ENCODE measurements at regions of chr10 and their contacts with region 1.

Region 1: GRCh38 chr10:48792687-48793096 is 108.0 kb downstream of the WDFY4 start:
- DNase-seq: no peak
- H3K4me3 Mint-ChIP-seq: no peak overlapping the region
- H3K27ac Mint-ChIP-seq: no peak overlapping the region
- H3K4me1 Mint-ChIP-seq: no peaks in the 10 kb centered on the region
- H3K27me3 Mint-ChIP-seq: peaks cover 5% of the 10 kb centered on the region

Region 2: GRCh38 chr10:48733329-48733728 is 59.4 kb before region 1 on chr10:
- CTCF ChIA-PET with region 1: no interaction called
- POLR2A ChIA-PET with region 1: no interaction called
- intact Hi-C with region 1: no loop called
- DNase-seq: no peak
- H3K4me3 Mint-ChIP-seq: no peak overlapping the region
- H3K27ac Mint-ChIP-seq: no peak overlapping the region
- H3K4me1 Mint-ChIP-seq: no peaks in the 10 kb centered on the region
- H3K27me3 Mint-ChIP-seq: peaks cover 7% of the 10 kb centered on the region

Region 3: GRCh38 chr10:49177391-49178355 is 385.0 kb after region 1 on chr10:
- CTCF ChIA-PET with region 1: no interaction called
- POLR2A ChIA-PET with region 1: no interaction called
- intact Hi-C with region 1: loop called (anchors 5 kb)
- DNase-seq: peak; percentile 89
- H3K4me3 Mint-ChIP-seq: peak overlapping the region; percentile 63
- H3K27ac Mint-ChIP-seq: peak overlapping the region; percentile 94
- H3K4me1 Mint-ChIP-seq: peaks cover 71% of the 10 kb centered on the region
- H3K27me3 Mint-ChIP-seq: no peaks in the 10 kb centered on the region

Measured in activated CD4-positive, alpha-beta memory T cell treated with anti-CD3 and anti-CD28 coated beads for 36 hours (primary cell).